ENCODE measurements at regions of chr3 and their contacts with region 1.

Region 1: DNA sequence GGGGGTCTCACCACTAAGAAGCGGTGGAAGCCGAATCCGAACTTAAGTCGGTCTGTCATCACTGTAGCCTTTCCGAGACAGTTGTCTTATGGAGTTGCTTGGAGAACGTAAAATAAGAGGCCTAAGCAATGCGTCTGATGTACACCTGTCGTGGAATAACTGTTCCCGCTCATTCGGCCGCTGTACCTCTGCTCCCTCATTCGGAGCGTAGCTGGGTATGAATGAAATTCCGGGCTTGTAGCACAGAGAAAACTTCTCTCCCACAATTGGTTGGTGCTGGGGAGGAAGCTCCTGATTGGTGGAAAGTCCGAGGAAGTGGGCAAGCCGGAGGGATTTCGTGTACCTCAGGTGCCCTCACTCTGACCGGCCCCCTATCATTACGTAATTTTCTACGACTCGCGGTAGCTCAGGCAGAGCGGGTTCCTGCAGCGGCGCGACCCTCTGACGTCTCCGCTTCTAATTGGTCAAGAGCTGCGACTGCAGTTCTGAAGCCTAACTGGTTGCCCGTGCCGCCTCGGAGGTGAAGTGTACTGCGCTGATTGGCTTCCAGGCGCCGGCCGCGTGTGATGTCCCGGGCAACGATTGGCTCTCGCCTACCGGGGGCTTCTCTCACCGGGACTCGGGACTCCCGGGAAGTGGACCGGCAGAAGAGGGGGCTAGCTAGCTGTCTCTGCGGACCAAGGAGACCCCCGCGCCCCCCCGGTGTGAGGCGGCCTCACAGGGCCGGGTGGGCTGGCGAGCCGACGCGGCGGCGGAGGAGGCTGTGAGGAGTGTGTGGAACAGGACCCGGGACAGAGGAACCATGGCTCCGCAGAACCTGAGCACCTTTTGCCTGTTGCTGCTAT is at the start of gene DNAJB11:
- DNase-seq: peak; percentile 91
- ATAC-seq: peak; percentile 82
- H3K4me3 Mint-ChIP-seq: peak within 1 kb of the TSS; percentile 94
- H3K27ac Mint-ChIP-seq: peak within 1 kb of the TSS; percentile 97
- H3K4me1 Mint-ChIP-seq: peaks cover 56% of the 10 kb centered on the region
- H3K27me3 Mint-ChIP-seq: no peaks in the 10 kb centered on the region
- CTCF ChIP-seq: no peak
- total RNA-seq, gene DNAJB11: 51.3 and 52.5 TPM in 2 replicates

Region 2: DNA sequence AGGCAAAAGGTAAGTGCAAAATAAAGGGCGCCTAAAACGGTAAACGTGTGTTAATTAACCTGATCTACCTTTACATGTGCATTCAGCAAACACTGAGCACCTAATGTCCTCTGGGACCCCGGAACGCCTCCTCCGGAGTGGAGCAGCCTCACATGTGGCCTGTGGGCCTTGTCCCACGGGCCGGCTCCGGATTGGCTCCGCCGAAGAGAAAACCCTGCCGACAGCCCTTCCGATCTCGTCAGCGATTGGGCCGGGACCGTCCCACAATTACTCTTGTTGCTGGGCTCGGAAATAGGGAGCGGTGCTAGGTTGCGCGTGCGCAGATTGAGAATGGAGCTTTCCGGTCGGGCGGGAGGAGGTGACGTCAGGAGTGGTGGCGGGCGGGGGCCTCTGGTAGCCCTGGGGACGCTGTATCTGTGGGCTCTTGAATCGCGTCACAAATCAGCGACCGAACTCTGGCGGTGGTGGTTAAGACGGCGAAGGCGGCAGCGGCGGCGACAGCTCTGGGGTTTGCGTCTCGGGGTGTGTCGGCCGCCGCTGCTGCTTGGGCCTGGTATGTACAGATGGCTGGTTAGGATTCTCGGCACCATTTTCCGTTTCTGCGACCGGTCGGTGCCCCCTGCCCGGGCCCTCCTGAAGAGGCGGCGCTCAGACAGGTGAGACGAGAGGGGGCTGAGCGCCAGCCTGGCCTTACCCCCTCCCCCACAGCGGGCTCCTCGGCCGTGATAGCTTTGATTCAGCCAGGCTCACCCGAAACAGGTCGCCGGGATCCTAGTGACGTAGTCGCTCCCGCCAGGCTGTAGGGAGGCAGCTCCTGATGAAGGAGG is 984.2 kb before region 1 on chr3 and contains the start of gene SENP2:
- CTCF ChIA-PET with region 1: no interaction called
- POLR2A ChIA-PET with region 1: interaction called, 4 read pairs
- intact Hi-C with region 1: loop called (anchors 1 kb)
- DNase-seq: peak; percentile 98
- ATAC-seq: peak; percentile 95
- H3K4me3 Mint-ChIP-seq: peak within 1 kb of the TSS; percentile 97
- H3K27ac Mint-ChIP-seq: peak within 1 kb of the TSS; percentile 97
- H3K4me1 Mint-ChIP-seq: peaks cover 39% of the 10 kb centered on the region
- H3K27me3 Mint-ChIP-seq: no peaks in the 10 kb centered on the region
- CTCF ChIP-seq: no peak
- total RNA-seq, gene SENP2: 42.2 and 47.1 TPM in 2 replicates

Region 3: GRCh38 chr3:185942907-185943759 is 627.2 kb before region 1 on chr3:
- CTCF ChIA-PET with region 1: interaction called, 8 read pairs
- POLR2A ChIA-PET with region 1: interaction called, 66 read pairs
- intact Hi-C with region 1: loop called (anchors 1 kb)
- DNase-seq: peak; percentile 78
- ATAC-seq: peak; percentile 99
- H3K4me3 Mint-ChIP-seq: peak overlapping the region; percentile 58
- H3K27ac Mint-ChIP-seq: peak overlapping the region; percentile 61
- H3K4me1 Mint-ChIP-seq: peaks cover 16% of the 10 kb centered on the region
- H3K27me3 Mint-ChIP-seq: peaks cover 7% of the 10 kb centered on the region
- CTCF ChIP-seq: peak; percentile 99

Region 4: GRCh38 chr3:186526256-186526606 is 44.1 kb before region 1 on chr3:
- CTCF ChIA-PET with region 1: no interaction called
- POLR2A ChIA-PET with region 1: no interaction called
- intact Hi-C with region 1: loop called (anchors 2 kb)
- DNase-seq: peak; percentile 50
- ATAC-seq: peak; percentile 80
- H3K4me3 Mint-ChIP-seq: peak overlapping the region; percentile 55
- H3K27ac Mint-ChIP-seq: peak overlapping the region; percentile 86
- H3K4me1 Mint-ChIP-seq: peaks cover 85% of the 10 kb centered on the region
- H3K27me3 Mint-ChIP-seq: peaks cover 2% of the 10 kb centered on the region
- CTCF ChIP-seq: no peak

Region 5: DNA sequence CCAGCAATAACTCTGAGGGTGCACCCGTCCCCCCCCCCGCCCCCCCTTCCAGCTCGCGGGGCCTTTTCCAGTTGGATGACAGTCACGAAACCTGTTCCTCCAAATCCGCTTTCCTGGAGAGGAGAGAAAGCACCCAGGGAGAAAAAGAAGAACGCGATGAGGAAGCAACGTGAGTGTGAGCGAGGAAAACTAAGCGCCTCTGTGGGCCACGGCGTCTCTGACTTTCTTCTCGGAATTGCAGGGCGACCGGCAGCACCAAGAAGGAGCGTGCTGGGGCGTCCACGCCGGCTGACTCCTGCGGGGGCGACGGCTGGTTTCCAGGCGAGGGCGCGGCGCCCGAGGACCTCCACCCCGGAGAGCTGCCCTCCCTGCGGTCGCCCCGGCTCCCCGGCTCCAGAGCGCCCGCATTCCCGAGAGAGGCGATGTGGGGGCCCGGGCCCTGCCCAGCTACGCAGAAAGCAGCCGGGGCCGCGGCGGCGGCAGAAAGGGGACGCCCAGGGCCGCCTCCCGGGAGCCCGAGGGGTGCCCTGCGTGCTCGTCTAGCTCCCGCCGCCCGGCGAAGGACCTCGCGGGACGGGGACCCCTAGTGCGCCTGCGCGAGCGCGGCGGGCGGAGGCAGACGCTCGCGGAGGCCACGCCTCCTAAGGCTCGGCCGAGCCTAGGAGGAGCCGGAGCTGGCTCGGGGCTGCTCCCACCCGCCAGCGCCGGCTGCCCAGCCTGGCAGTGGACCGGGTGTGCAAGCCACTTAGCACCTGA is 256.8 kb after region 1 on chr3:
- CTCF ChIA-PET with region 1: no interaction called
- POLR2A ChIA-PET with region 1: interaction called, 7 read pairs
- intact Hi-C with region 1: loop called (anchors 5 kb)
- DNase-seq: peak; percentile 85
- ATAC-seq: peak; percentile 94
- H3K4me3 Mint-ChIP-seq: peak overlapping the region; percentile 71
- H3K27ac Mint-ChIP-seq: no peak overlapping the region
- H3K4me1 Mint-ChIP-seq: peaks cover 22% of the 10 kb centered on the region
- H3K27me3 Mint-ChIP-seq: peaks cover 47% of the 10 kb centered on the region
- CTCF ChIP-seq: no peak

Region 6: DNA sequence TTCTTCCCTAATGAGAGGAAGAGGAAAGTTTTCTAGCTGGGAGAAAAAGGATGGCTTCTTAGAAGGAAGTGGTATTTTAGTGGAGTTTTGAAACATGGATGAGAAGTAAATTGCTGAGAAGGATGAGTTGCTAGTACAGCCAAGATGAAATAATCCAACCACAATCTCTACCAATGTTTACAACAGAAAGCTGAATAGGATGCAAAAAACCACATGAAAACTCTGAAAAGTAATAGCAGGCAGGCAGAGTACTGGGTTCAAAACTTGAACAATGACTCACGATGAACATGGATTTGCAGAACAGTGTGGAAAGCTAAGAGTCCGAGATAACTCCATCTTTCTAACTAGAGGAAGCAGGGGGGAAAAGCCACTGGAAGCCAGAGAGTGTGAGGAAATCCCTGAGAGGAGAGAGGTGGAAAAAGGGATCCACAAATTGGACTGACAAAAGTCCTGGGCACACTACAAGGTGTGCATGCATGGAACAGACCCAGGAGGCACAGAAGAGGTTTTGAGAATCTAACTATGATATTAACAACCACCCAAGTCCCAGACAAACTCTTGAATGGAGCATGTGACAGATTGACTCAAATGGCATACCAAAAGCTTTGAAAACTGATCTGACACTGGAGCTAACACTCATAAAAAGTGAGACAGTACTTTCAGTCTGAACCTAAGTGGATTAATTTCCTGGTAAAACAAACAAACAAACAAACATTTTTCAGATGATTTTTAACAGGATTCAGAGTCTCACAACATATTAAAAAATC is 436.7 kb after region 1 on chr3:
- CTCF ChIA-PET with region 1: no interaction called
- POLR2A ChIA-PET with region 1: no interaction called
- intact Hi-C with region 1: no loop called
- DNase-seq: no peak
- ATAC-seq: no peak
- H3K4me3 Mint-ChIP-seq: no peak overlapping the region
- H3K27ac Mint-ChIP-seq: peak overlapping the region; percentile 70
- H3K4me1 Mint-ChIP-seq: peaks cover 93% of the 10 kb centered on the region
- H3K27me3 Mint-ChIP-seq: no peaks in the 10 kb centered on the region
- CTCF ChIP-seq: no peak

Region 7: GRCh38 chr3:187139126-187139894 is 569.0 kb after region 1 on chr3 and contains the start of gene RPL39L:
- CTCF ChIA-PET with region 1: no interaction called
- POLR2A ChIA-PET with region 1: interaction called, 3 read pairs
- intact Hi-C with region 1: loop called (anchors 2 kb)
- DNase-seq: peak; percentile 95
- ATAC-seq: peak; percentile 95
- H3K4me3 Mint-ChIP-seq: peak within 1 kb of the TSS; percentile 90
- H3K27ac Mint-ChIP-seq: peak within 1 kb of the TSS; percentile 95
- H3K4me1 Mint-ChIP-seq: peaks cover 19% of the 10 kb centered on the region
- H3K27me3 Mint-ChIP-seq: no peaks in the 10 kb centered on the region
- CTCF ChIP-seq: no peak
- total RNA-seq, gene RPL39L: 4.7 and 6.9 TPM in 2 replicates

Measured in activated B cell treated with CpG ODN at 0.5 μM for 24 hours (primary cell).